Activated CD8-positive, alpha-beta T cell treated with anti-CD3 and anti-CD28 coated beads, Interleukin-2, amount 10 ng/mL, durations not matched to agents 7 days and 5 days (primary cell): ENCODE measurements at regions of chr11 and their contacts with region 1.

Region 1: GRCh38 chr11:4187055-4187988 is 92.7 kb downstream of the RRM1 start:
- DNase-seq: peak; percentile 86
- ATAC-seq: peak; percentile 95
- H3K4me3 Mint-ChIP-seq: peak overlapping the region; percentile 73
- H3K27ac Mint-ChIP-seq: no peak overlapping the region
- H3K4me1 Mint-ChIP-seq: peaks cover 17% of the 10 kb centered on the region
- H3K27me3 Mint-ChIP-seq: peaks cover 7% of the 10 kb centered on the region

Region 2: DNA sequence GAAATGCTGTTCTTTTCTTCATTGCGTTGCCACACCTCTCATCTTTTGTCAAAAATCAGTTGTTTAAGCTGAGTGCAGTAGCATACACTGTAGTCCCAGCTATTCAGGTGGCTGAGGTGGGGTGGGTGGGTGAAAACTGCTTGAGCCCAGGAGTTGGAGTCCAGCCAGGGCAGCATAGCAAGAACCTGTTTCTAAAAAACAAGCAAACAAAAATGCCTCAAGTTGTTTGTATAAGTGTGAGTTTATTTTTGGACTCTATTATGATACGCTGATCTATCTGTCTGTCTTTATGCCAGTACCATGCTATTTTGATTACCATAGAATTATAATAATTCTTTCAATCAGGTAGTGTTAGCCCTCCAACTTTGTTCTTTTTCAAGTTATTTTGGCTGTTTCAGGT is 155.2 kb before region 1 on chr11:
- CTCF ChIA-PET with region 1: no interaction called
- POLR2A ChIA-PET with region 1: no interaction called
- DNase-seq: no peak
- ATAC-seq: no peak
- H3K4me3 Mint-ChIP-seq: no peak overlapping the region
- H3K27ac Mint-ChIP-seq: no peak overlapping the region
- H3K4me1 Mint-ChIP-seq: peaks cover 10% of the 10 kb centered on the region
- H3K27me3 Mint-ChIP-seq: no peaks in the 10 kb centered on the region

Region 3: DNA sequence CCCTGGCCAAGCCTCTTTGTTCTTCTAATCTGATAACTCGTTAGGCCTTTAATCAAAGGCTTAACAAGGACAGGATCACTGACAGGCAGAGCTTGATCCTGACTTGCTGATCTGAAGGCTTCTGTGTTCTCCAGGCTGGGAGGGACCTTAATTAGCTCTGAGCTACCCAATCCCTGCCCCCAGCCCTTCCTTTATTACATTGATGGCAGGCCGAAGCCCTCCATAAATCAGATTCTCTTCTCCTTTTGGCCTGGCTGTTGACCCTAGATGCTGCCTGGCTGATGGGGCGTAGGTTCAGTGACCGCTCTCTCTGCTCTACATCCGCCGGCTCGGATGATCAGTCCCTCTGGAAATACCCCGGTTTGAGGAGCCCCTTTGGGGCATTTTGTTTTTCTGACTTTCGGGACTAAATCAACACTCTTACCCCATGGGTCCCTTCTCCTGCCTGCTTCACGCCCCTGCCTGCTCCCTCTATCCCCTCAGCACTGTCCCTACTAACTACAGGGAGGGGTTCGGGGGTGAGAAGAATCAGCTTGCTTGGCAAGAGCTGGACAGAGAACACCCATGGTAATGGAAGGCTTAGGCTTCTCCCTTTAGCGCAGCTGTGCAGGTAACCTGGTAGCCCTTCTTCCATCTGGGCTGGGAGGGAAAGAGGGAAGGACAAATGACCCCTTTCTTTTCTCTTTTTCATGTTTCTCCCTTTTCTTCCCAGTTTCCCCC is 102.8 kb before region 1 on chr11:
- CTCF ChIA-PET with region 1: no interaction called
- POLR2A ChIA-PET with region 1: no interaction called
- DNase-seq: no peak
- ATAC-seq: no peak
- H3K4me3 Mint-ChIP-seq: no peak overlapping the region
- H3K27ac Mint-ChIP-seq: no peak overlapping the region
- H3K4me1 Mint-ChIP-seq: peaks cover 27% of the 10 kb centered on the region
- H3K27me3 Mint-ChIP-seq: no peaks in the 10 kb centered on the region

Region 4: DNA sequence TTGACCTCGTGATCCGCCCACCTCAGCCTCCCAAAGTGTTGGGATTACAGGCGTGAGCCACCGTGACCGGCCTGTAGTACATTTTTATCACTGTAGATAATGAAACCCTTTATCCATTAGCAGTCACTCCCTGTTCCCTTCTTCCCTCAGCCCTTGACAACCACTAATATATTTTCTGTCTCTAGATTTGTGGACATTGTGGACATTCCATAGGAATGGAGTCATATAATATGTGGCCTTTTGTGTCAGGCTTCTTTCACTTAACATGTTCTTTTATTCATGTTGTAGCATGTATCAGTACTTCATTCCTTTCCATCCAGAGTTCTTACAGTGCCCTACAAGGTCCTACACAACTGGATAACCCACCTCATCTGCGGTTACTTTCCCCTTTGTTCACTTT is 62.2 kb before region 1 on chr11:
- CTCF ChIA-PET with region 1: no interaction called
- POLR2A ChIA-PET with region 1: no interaction called
- DNase-seq: no peak
- ATAC-seq: no peak
- H3K4me3 Mint-ChIP-seq: no peak overlapping the region
- H3K27ac Mint-ChIP-seq: peak overlapping the region; percentile 14
- H3K4me1 Mint-ChIP-seq: no peaks in the 10 kb centered on the region
- H3K27me3 Mint-ChIP-seq: no peaks in the 10 kb centered on the region

Region 5: GRCh38 chr11:4203603-4204360 is 16.5 kb after region 1 on chr11:
- CTCF ChIA-PET with region 1: interaction called, 21 read pairs
- POLR2A ChIA-PET with region 1: no interaction called
- DNase-seq: no peak
- ATAC-seq: no peak
- H3K4me3 Mint-ChIP-seq: no peak overlapping the region
- H3K27ac Mint-ChIP-seq: no peak overlapping the region
- H3K4me1 Mint-ChIP-seq: no peaks in the 10 kb centered on the region
- H3K27me3 Mint-ChIP-seq: peaks cover 11% of the 10 kb centered on the region

Region 6: GRCh38 chr11:4539603-4540219 is 352.4 kb after region 1 on chr11:
- CTCF ChIA-PET with region 1: interaction called, 109 read pairs
- POLR2A ChIA-PET with region 1: no interaction called
- DNase-seq: peak; percentile 61
- ATAC-seq: peak; percentile 70
- H3K4me3 Mint-ChIP-seq: no peak overlapping the region
- H3K27ac Mint-ChIP-seq: no peak overlapping the region
- H3K4me1 Mint-ChIP-seq: no peaks in the 10 kb centered on the region
- H3K27me3 Mint-ChIP-seq: peaks cover 16% of the 10 kb centered on the region

Region 7: DNA sequence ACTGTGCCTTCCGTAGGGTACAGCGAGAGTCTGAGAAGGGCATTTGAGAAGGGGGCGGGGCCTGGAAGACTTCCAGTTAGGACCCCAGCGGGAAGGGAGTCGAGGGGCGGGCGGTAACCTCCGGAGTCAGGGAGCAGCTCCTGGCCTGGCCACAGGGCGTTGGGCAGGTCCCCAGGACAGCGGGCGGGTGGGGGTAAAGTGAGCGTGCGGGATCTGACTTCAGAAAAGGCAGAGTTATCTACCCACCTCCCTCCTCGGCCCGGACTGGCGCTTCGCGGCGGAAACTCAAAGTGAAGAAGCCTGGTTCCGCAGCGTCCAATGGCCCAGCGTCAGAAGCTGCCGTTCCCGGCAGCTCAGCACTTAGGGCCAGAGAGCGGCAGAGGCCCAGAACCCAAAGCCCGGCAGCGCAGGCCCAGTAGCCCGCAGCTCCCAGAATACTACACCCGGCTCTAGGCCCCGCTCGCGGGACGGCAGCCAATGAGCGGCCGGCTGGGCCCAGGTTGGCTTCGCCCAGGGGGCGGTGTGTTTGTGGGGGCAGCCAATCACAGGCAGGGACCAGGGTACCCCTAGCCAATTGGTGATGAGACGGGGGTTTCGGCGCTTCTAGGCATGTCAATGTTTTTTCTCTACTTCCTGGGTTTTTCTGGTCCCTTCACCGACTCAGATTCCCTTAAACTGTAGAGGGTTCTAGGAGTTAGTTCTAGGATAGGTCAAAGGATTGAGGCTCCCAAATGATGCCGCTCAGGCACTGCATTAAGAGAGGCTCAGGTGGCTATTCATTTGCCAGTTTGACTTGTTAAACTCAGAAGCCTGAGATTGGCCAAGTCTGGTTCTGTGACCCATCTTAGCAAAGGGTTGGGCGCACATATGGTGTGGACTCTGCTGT is 420.7 kb after region 1 on chr11 and contains the start of gene TRIM68:
- CTCF ChIA-PET with region 1: interaction called, 14 read pairs
- POLR2A ChIA-PET with region 1: no interaction called
- DNase-seq: peak; percentile 95
- ATAC-seq: peak; percentile 100
- H3K4me3 Mint-ChIP-seq: peak within 1 kb of the TSS; percentile 92
- H3K27ac Mint-ChIP-seq: peak within 1 kb of the TSS; percentile 91
- H3K4me1 Mint-ChIP-seq: peaks cover 39% of the 10 kb centered on the region
- H3K27me3 Mint-ChIP-seq: no peaks in the 10 kb centered on the region
- total RNA-seq, gene TRIM68: 10.8 to 12.3 TPM

Region 8: DNA sequence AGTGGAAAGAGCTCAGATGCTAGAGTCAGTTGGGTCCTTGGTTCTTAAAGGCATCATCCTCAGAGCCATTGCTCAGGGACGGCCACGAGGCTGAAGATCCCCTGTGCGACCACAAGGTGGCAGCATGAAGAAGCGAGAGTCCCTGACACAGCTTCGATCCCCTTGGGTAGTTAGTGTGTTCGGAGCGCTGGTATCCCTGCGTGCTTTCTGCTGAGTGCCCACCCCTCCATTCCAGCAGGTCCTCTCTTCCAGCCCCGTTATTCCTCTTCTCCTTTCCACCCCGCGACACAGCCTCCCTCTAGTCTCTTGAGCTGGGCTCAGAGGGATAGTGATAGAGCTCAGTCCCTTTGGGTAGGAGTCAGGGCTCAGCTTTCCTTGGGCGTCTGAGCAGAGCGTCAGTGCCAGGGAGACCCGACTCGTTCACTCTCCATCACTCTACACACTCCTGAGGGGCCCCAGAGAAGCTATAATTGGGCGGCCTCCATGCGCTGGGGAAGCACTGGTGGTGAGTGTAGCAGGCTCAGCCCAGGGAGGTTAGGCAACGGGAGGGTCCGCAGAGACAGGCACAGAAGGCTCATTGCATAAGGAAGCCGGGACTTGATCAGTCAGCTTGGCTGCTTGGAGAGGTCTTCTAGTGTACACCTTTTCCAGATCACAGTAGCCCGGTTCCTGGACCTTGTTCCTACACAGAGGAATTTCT is 449.8 kb after region 1 on chr11 and contains the start of gene OR51D1:
- CTCF ChIA-PET with region 1: interaction called, 17 read pairs
- POLR2A ChIA-PET with region 1: no interaction called
- DNase-seq: peak; percentile 75
- ATAC-seq: peak; percentile 97
- H3K4me3 Mint-ChIP-seq: no peak within 1 kb of the TSS
- H3K27ac Mint-ChIP-seq: no peak within 1 kb of the TSS
- H3K4me1 Mint-ChIP-seq: no peaks in the 10 kb centered on the region
- H3K27me3 Mint-ChIP-seq: peaks cover 3% of the 10 kb centered on the region
- total RNA-seq, gene OR51D1: not detected